Prostate gland (tissue), 2 donors: ENCODE measurements at regions of chr5 and their contacts with region 1.

Region 1: DNA sequence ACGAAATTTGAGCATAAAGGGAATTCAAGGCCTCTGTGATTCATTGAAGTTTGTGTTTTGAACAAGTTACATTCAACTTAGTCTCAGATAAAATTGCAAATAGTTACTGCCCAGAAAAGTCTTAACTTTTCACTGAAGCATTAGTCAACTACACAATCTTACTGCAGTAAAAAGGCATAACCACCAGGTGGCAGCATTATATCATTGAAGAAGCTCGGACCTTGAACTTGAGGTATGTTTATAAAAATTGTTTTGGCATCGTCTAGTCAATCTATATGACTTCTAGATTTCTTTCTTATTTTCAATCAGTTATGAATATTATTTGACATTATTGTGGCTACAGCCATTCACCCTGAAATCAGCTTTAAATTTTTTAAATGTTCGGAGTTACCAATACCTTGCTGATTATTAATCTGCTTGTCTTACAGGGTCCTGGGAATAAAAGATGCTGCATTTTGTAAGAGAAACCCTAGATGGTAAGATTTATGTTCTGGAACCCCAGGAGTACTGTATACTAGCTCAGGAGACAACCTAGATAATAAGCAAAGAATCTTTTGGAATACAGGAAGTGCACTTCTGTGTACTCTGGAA is 83.9 kb upstream of the GRAMD2B start:
- DNase-seq: peak; percentile 75
- H3K4me3 ChIP-seq: peak overlapping the region in 1 of 2 donors; percentile 12
- H3K27ac ChIP-seq: peak overlapping the region; percentile 27 to 47
- H3K4me1 ChIP-seq: no peaks in the 10 kb centered on the region
- H3K27me3 ChIP-seq: no peaks in the 10 kb centered on the region
- CTCF ChIP-seq: peak; percentile 84 to 93 (median 92)
- POLR2A ChIP-seq: no peak

Region 2: GRCh38 chr5:124847907-124848306 is 1491.4 kb before region 1 on chr5:
- intact Hi-C with region 1: no loop called
- DNase-seq: no peak
- H3K4me3 ChIP-seq: no peak overlapping the region
- H3K27ac ChIP-seq: no peak overlapping the region
- H3K4me1 ChIP-seq: no peaks in the 10 kb centered on the region
- H3K27me3 ChIP-seq: no peaks in the 10 kb centered on the region
- CTCF ChIP-seq: no peak
- POLR2A ChIP-seq: no peak

Region 3: DNA sequence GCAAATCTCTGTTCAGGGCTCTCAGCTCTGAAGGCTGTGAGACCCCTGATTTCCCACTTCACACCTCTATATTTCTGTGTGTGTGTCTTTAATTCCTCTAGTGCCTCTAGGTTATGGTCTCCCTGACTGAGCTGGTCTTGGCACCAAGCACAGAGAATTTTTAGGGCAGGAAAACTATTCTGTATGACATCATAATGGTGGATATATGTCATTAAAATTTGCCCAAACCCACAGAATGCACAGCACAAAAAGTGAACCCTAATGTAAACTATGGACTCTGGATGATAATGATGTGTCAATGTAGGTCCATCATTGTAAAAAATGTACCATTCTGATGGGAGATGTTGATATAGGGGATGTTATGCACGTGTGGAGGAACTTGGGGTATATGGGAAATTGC is 398.6 kb before region 1 on chr5:
- intact Hi-C with region 1: no loop called
- DNase-seq: no peak
- H3K4me3 ChIP-seq: no peak overlapping the region
- H3K27ac ChIP-seq: no peak overlapping the region
- H3K4me1 ChIP-seq: no peaks in the 10 kb centered on the region
- H3K27me3 ChIP-seq: no peaks in the 10 kb centered on the region
- CTCF ChIP-seq: no peak
- POLR2A ChIP-seq: no peak

Region 4: GRCh38 chr5:126544087-126544740 is 204.9 kb after region 1 on chr5:
- intact Hi-C with region 1: loop called (anchors 5 kb)
- DNase-seq: no peak
- H3K4me3 ChIP-seq: no peak overlapping the region
- H3K27ac ChIP-seq: no peak overlapping the region
- H3K4me1 ChIP-seq: no peaks in the 10 kb centered on the region
- H3K27me3 ChIP-seq: no peaks in the 10 kb centered on the region
- CTCF ChIP-seq: peak in 3 of 4 experiments; percentile 15 to 48 (median 24)
- POLR2A ChIP-seq: no peak

Region 5: GRCh38 chr5:126594676-126595485 is 255.6 kb after region 1 on chr5 and contains the start of gene ALDH7A1:
- intact Hi-C with region 1: loop called (anchors 5 kb)
- DNase-seq: peak; percentile 87
- H3K4me3 ChIP-seq: peak within 1 kb of the TSS; percentile 46 to 59
- H3K27ac ChIP-seq: peak within 1 kb of the TSS; percentile 66 to 75
- H3K4me1 ChIP-seq: peaks cover 5% of the 10 kb centered on the region
- H3K27me3 ChIP-seq: no peaks in the 10 kb centered on the region
- CTCF ChIP-seq: peak in 2 of 4 experiments; percentile 46 to 49
- POLR2A ChIP-seq: peak; percentile 66
- total RNA-seq, gene ALDH7A1: 59.8 to 62.7 TPM

Region 6: GRCh38 chr5:127111112-127111511 is 771.8 kb after region 1 on chr5:
- intact Hi-C with region 1: no loop called
- DNase-seq: no peak
- H3K4me3 ChIP-seq: no peak overlapping the region
- H3K27ac ChIP-seq: no peak overlapping the region
- H3K4me1 ChIP-seq: no peaks in the 10 kb centered on the region
- H3K27me3 ChIP-seq: no peaks in the 10 kb centered on the region
- CTCF ChIP-seq: no peak
- POLR2A ChIP-seq: no peak